Ascending aorta (tissue), 2 donors: ENCODE measurements at regions of chr2 and their contacts with region 1.

Region 1: DNA sequence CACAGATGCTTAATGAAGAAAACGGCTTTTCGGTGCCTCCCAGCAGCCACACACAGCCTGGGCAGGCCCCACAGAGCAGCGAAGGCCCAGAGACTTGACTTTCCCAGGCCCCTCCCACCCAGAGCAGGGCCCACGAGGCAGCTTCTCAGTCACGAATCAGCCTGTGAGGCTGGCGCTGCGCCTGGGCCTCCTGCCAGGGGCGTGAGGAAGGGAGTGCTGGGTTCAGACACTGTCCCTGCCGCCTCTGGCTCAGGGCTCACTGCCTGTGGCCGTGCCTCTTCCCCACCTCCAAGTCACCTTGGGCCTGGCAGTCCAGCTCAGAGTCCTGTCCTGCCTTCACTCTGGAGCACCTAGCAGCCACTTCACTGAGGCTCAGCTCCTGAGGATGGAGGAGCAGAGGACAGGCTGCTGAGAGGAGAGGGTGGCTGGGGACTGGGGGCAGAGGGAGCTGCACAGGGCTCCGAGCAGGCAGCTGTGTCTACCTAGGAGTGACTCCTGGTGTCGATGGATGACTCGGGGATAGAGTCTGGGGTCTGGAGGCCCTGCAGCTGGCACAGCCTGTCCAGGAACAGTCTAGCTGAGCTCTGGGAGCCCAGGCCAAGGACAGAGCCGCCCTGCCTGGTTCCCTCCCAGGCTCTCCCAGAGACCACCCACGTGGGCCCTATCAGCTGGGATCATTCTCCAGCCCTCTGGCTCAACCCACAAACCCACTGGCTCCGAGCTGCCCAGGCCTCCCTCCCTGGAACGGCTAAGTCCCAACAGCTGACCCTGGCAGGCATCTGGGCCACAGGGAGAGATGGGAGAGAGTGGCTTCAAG is 36.4 kb upstream of the FOSL2 start:
- DNase-seq: peak; percentile 81 to 95
- H3K4me3 ChIP-seq: no peak overlapping the region
- H3K27ac ChIP-seq: peak overlapping the region; percentile 91 to 93
- H3K4me1 ChIP-seq: peaks cover 10 to 16% of the 10 kb centered on the region in 2 donors
- H3K27me3 ChIP-seq: no peaks in the 10 kb centered on the region
- CTCF ChIP-seq: no peak

Region 2: GRCh38 chr2:28343184-28343942 is 12.9 kb before region 1 on chr2:
- intact Hi-C with region 1: loop called (anchors 1 kb)
- DNase-seq: no peak
- H3K4me3 ChIP-seq: peak overlapping the region; percentile 5 to 12
- H3K27ac ChIP-seq: peak overlapping the region; percentile 78 to 89
- H3K4me1 ChIP-seq: peaks cover 10 to 52% of the 10 kb centered on the region in 2 donors
- H3K27me3 ChIP-seq: no peaks in the 10 kb centered on the region
- CTCF ChIP-seq: no peak

Region 3: DNA sequence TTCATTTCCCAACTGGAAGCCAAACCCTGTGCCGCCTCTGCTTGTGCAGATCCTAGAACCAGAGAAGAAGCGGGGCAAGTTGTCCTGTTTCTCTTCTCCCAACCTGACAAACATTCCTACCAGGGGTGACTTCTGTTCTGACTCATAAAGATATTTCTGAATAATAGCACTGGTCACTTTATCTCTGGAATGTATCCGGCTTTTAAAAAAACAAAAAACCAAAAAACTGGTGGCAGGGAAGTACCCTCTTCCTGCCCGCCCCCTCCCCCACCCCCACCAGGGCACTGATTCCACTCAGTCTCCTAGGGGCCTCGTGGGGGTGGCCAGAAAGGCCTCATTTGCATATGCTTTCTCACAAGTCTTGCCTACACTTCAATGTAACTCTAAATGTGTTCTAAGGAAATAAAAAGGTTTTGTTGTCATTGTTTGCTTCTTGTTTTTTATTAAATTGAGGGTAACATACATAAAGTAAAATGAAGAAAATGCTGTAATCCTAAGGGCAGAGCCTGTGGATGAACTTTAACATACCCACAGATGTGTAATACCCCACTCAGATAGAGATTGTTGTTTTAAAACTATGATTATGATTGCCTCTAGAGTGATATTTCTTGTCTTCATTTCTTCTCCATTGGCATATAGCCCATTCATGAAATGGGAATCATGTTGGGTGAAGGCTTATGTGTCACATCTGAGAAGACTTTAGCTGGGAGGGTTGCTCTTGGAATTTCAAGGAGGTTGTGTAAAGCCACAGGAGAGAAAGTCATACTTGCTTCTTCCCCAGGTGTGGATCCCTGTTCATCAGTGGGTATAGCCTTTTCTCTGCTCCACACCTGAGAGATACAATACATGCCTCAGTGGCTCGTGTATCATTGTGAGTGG is 31.0 kb after region 1 on chr2:
- intact Hi-C with region 1: loop called (anchors 1 kb)
- DNase-seq: no peak
- H3K4me3 ChIP-seq: no peak overlapping the region
- H3K27ac ChIP-seq: peak overlapping the region; percentile 14 to 43
- H3K4me1 ChIP-seq: peaks cover 0 to 8% of the 10 kb centered on the region in 2 donors
- H3K27me3 ChIP-seq: no peaks in the 10 kb centered on the region
- CTCF ChIP-seq: no peak